ENCODE measurements at regions of chr22 and their contacts with region 1.

Region 1: GRCh38 chr22:37752466-37753087 is 55.2 kb upstream of the GCAT start:
- DNase-seq: peak; percentile 94
- H3K4me3 ChIP-seq: 0 out of 4 replicates have a peak overlapping the region, but pooled peaks of 1 of the 2 experiments have one; percentile 1
- H3K27ac ChIP-seq: peak overlapping the region; percentile 77 to 96
- H3K4me1 ChIP-seq: peaks cover 40 to 51% of the 10 kb centered on the region in 2 experiments
- H3K27me3 ChIP-seq: no peaks in the 10 kb centered on the region
- CTCF ChIP-seq: peak; percentile 25; the same call in 1 of the 2 replicates
- EP300 ChIP-seq: peak; percentile 78 to 88
- RAD21 ChIP-seq: peak; percentile 36

Region 2: GRCh38 chr22:37734964-37735451 is 17.6 kb before region 1 on chr22:
- CTCF ChIA-PET with region 1: interaction called, 12 read pairs
- POLR2A ChIA-PET with region 1: no interaction called
- DNase-seq: peak; percentile 91
- H3K4me3 ChIP-seq: no peak overlapping the region; a peak in 1 of 4 replicates
- H3K27ac ChIP-seq: peak overlapping the region in 1 of 2 experiments; percentile 8; a peak in 1 of 4 replicates
- H3K4me1 ChIP-seq: peaks cover 0 to 10% of the 10 kb centered on the region in 2 experiments; a peak in 1 of 4 replicates
- H3K27me3 ChIP-seq: no peaks in the 10 kb centered on the region
- CTCF ChIP-seq: peak; percentile 41
- EP300 ChIP-seq: no peak
- RAD21 ChIP-seq: peak; percentile 72

Measured in SK-N-SH (cell line).